Common myeloid progenitor, CD34-positive (primary cell): ENCODE measurements at regions of chr11 and their contacts with region 1.

Region 1: GRCh38 chr11:119030329-119031049 is at the start of gene SLC37A4:
- DNase-seq: peak; percentile 98 to 99 (median 99)
- H3K4me3 ChIP-seq: peak within 1 kb of the TSS; percentile 49 to 88 (median 83)
- H3K27ac ChIP-seq: peak within 1 kb of the TSS in 1 of 2 experiments; percentile 73
- H3K4me1 ChIP-seq: peaks cover 0 to 22% (median 21%) of the 10 kb centered on the region in 4 experiments
- H3K27me3 ChIP-seq: no peaks in the 10 kb centered on the region

Region 2: GRCh38 chr11:119018074-119018938 is 12.2 kb before region 1 on chr11 and contains the starts of genes RPS25 and TRAPPC4:
- CTCF ChIA-PET with region 1: interaction called, 13 read pairs
- POLR2A ChIA-PET with region 1: no interaction called
- DNase-seq: peak; percentile 98 to 99 (median 99)
- H3K4me3 ChIP-seq: peak within 1 kb of the TSS; percentile 94 to 100 (median 96)
- H3K27ac ChIP-seq: peak within 1 kb of the TSS; percentile 87 to 96
- H3K4me1 ChIP-seq: peaks cover 17 to 32% (median 23%) of the 10 kb centered on the region in 4 experiments
- H3K27me3 ChIP-seq: no peaks in the 10 kb centered on the region

Region 3: DNA sequence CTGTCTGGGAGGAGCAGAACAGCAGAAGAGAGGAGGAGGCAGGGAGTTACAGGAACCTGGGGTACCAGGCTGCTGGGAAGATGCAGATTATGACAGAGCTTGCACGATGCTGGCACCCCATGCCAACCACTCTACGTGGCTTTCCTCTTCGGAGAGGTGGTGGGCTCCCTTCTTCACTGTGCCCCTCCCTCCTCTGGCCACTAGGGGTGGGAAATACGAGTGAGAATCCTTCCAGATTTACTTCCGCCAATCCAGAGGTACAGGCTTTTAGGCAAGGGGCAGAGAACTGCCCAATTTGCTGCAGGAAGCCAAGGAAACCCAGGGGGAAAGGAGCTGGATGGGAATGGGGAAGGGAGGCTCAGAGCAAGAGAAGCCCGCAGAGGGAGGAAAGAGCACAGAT is 14.2 kb after region 1 on chr11:
- CTCF ChIA-PET with region 1: interaction called, 19 read pairs
- POLR2A ChIA-PET with region 1: interaction called, 4 read pairs
- DNase-seq: no peak
- H3K4me3 ChIP-seq: no peak overlapping the region
- H3K27ac ChIP-seq: no peak overlapping the region
- H3K4me1 ChIP-seq: no peaks in the 10 kb centered on the region
- H3K27me3 ChIP-seq: no peaks in the 10 kb centered on the region